Vagina (tissue), 2 donors: ENCODE measurements at regions of chr2 and their contacts with region 1.

Region 1: DNA sequence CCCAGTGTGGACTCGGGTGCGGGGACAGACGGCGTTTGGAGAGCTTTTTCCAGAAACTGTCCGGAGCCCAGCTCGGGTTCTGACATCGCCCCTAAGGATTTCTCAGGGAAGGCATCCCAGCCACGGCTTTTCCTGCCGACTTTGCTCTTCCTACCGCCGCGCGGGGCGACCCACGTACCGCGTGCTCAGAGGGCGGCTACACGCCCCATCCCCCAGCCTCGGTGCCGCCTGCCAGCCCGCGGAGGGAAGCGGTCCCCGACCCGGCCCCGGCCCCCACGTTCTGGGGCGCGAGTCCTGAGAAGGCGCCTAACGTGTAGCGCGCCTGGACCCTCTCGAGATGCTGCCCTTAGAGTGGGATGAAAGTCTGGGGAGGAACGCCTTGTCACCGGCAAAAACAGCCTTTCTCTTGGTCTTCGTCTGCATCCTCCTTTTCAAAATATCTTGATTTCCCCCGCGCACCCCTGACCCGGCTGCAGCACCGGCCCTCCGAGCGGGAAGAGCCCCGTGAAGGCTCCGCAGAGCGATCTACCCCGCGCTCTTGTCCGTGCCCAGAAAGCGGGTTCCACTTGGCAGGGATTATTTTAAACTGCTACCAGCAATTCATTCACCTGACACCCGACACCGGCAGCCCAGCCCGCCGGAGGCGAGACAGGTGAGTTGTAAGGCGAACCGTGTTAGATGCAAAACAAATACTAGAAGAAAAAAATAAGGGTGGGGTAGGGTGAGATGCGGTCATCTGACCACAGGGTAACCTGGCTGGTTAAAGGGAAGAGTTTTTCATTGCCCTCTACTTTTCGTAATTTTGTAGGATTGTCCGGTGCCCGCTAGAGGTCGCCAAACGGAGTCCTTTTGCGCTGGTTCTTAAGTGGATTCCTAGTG is 812 bp upstream of the KCNG3 start:
- DNase-seq: no peak
- H3K4me3 ChIP-seq: peak overlapping the region; percentile 62 to 63
- H3K27ac ChIP-seq: peak overlapping the region; percentile 73
- H3K4me1 ChIP-seq: no peaks in the 10 kb centered on the region
- H3K27me3 ChIP-seq: no peaks in the 10 kb centered on the region
- CTCF ChIP-seq: peak; percentile 65 to 93 (median 67)
- POLR2A ChIP-seq: no peak

Region 2: DNA sequence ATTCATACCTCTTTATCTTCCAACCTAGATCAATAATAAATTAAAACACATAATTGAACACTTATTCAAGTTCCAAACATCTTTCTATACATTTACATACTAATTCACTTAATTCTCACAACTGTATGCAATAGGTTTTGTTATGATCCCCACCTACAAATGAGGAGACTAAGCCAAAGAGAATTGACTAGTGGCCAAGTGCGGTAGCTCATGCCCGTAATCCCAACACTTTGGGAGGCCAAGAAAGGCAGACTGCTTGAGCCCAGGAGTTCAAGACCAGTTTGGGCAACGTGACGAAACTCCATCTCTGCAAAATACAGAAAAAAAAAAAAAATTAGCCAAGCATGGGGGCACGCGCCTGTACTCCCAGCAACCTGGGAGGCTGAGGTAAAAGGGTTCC is 37.6 kb before region 1 on chr2:
- intact Hi-C with region 1: loop called (anchors 1 kb)
- DNase-seq: no peak
- H3K4me3 ChIP-seq: no peak overlapping the region
- H3K27ac ChIP-seq: no peak overlapping the region
- H3K4me1 ChIP-seq: no peaks in the 10 kb centered on the region
- H3K27me3 ChIP-seq: no peaks in the 10 kb centered on the region
- CTCF ChIP-seq: no peak
- POLR2A ChIP-seq: no peak

Region 3: DNA sequence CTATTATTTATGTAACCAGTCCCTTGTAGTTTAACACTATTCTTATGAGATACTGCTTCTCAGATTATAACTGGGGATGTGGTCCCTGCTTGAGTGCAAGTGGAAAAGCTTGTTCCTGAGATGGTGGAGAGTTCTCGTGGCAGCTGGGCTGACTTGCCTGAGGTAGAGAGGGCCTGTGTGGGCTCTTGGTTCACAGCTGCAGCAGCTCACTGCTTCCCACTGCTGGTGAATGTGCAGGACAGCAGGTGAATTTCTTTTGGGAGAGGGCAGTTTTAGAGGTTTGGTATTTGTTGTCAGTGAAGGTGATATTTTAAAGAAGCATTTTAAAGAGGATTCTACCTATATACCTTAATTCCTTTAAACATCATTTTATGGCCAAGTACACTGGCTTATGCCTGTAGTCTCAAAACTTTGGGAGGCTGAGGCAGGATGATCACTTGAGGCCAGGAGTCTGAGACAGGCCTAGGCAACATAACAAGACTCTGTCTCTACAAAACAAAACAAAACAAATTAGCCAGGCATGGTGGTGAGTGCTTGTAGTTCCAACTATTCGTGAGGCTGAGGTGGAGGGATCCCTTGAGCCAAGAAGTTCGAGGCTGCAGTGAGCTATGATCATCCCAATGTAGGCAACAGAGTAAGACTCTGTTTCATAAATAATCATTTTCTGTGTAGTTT is 168.6 kb after region 1 on chr2:
- intact Hi-C with region 1: loop called (anchors 10 kb)
- DNase-seq: no peak
- H3K4me3 ChIP-seq: no peak overlapping the region
- H3K27ac ChIP-seq: no peak overlapping the region
- H3K4me1 ChIP-seq: no peaks in the 10 kb centered on the region
- H3K27me3 ChIP-seq: no peaks in the 10 kb centered on the region
- CTCF ChIP-seq: peak; percentile 80 to 93 (median 80)
- POLR2A ChIP-seq: no peak